Activated naive CD4-positive, alpha-beta T cell treated with anti-CD3 and anti-CD28 coated beads for 36 hours (primary cell): ENCODE measurements at regions of chr3 and their contacts with region 1.

Region 1: DNA sequence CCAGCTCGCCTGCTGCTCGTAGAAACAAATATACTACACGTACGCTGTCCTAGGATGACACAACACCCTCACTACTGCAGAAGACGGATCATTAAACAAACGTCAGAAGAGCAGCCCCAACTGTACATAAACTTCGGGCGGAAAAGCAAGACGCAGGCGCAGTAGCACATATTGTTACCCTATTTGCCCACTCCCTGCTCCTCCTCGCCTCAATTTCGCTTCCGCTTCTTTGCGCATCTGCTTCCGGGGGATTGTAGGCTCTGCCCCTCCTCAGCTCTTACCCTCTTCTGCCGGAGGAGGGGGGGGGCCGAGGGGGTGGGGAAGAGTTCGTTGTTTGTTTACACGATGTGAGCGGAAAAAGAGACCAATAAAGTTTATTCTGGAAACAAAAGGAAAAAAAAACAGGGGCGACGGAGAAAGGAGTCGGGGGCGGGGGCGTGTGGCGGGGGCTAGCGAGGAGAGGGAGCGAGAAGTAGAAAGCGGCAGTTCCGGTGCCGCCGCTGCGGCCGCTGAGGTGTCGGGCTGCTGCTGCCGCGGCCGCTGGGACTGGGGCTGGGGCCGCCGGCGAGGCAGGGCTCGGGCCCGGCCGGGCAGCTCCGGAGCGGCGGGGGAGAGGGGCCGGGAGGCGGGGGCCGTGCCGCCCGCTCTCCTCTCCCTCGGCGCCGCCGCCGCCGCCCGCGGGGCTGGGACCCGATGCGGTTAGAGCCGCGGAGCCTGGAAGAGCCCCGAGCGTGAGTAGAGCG is at the start of gene PIK3CA:
- DNase-seq: peak; percentile 95
- H3K4me3 Mint-ChIP-seq: peak within 1 kb of the TSS; percentile 94
- H3K27ac Mint-ChIP-seq: peak within 1 kb of the TSS; percentile 96
- H3K4me1 Mint-ChIP-seq: peaks cover 36% of the 10 kb centered on the region
- H3K27me3 Mint-ChIP-seq: no peaks in the 10 kb centered on the region
- total RNA-seq, gene PIK3CA: 15.8 to 15.9 TPM

Region 2: GRCh38 chr3:177426878-177427495 is 1721.1 kb before region 1 on chr3:
- CTCF ChIA-PET with region 1: no interaction called
- intact Hi-C with region 1: loop called (anchors 1 kb)
- DNase-seq: peak; percentile 85
- H3K4me3 Mint-ChIP-seq: peak overlapping the region; percentile 40
- H3K27ac Mint-ChIP-seq: peak overlapping the region; percentile 92
- H3K4me1 Mint-ChIP-seq: peaks cover 29% of the 10 kb centered on the region
- H3K27me3 Mint-ChIP-seq: peaks cover 2% of the 10 kb centered on the region

Region 3: DNA sequence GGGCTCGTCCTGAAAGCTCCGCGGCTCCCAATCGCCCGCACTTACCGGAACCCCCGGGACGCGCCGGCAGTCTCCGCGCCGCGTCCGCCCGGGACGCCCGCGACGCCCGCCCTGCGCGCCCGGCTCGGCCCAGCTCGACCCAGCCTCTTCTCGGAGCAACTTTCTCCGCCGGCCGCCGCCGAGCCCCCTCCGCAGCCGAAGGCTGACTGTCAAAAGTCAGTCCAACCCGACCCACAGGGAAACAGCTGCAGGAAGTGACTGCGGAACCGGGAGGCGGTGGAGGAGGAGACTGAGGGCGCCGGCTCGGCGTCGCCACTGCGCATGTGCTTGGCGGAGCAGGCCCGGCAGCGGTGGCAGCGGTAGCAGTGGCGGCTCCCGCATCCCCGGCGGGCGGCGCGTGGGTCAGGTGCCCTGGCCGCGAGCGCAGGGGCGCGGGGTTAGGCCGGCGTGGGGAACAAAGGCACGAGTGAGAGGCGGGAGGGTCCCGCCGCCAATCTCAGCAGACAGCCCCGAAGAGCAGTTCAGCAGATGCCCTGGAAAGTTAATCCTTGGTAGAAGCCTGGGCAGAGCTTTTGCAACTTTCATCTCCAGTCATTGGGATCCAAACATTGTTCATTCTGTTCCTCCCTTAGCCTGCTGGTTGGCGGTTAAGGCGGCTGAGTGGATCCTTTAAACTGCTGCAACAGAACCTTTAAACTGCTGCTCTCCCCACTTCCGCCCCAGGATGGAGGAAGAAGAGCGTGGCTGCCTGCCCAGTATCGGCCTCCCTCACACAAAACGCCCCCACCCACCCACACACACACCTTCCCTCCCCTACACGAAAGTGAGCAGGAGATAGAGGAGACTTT is 76.3 kb before region 1 on chr3 and contains the start of gene ZMAT3:
- CTCF ChIA-PET with region 1: interaction called, 4 read pairs
- intact Hi-C with region 1: loop called (anchors 1 kb)
- DNase-seq: peak; percentile 86
- H3K4me3 Mint-ChIP-seq: peak within 1 kb of the TSS; percentile 99
- H3K27ac Mint-ChIP-seq: peak within 1 kb of the TSS; percentile 89
- H3K4me1 Mint-ChIP-seq: peaks cover 42% of the 10 kb centered on the region
- H3K27me3 Mint-ChIP-seq: no peaks in the 10 kb centered on the region
- total RNA-seq, gene ZMAT3: 26.9 to 28.3 TPM

Region 4: GRCh38 chr3:179196098-179196497 is 48.1 kb after region 1 on chr3:
- CTCF ChIA-PET with region 1: no interaction called
- intact Hi-C with region 1: loop called (anchors 1 kb)
- DNase-seq: peak; percentile 33
- H3K4me3 Mint-ChIP-seq: no peak overlapping the region
- H3K27ac Mint-ChIP-seq: no peak overlapping the region
- H3K4me1 Mint-ChIP-seq: peaks cover 45% of the 10 kb centered on the region
- H3K27me3 Mint-ChIP-seq: no peaks in the 10 kb centered on the region

Region 5: DNA sequence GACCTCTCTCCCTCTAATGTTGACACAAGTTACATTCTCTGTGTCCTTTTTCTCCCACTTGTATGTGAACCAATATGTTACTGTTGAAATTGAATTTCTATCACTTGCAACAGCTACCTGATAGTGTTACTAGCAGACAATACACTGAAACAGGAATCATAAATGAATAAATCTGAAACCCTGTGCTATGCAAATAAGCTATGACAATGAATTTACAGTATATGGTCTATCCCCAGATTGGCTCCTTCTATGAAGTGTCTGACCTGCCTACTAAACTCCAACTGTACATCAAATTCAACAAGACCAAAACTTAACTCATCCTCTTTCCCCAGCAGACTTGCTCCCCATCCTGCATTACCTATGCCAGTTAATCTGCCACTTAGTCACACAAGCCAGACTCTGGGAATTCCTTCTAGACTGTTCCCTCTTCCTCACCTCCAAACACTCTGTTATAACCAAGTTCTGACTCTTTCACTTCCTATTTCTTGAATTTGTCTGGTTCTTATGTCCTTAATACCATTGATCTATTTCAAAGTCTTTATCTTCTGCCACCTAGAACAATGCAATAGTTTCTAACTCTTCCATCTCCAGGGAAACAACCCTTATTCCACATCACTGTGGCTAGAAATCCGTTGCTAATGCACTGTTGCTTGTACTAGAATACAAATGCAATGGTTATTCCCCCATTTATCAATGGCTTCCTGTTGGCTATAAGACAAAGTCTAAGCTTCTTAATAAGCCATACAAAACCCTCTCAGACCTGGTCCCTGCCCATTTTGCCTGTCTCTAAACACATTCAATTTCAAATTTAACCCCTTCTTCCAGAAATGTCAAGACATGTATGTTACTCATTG is 161.4 kb after region 1 on chr3:
- CTCF ChIA-PET with region 1: interaction called, 19 read pairs
- intact Hi-C with region 1: no loop called
- DNase-seq: no peak
- H3K4me3 Mint-ChIP-seq: no peak overlapping the region
- H3K27ac Mint-ChIP-seq: no peak overlapping the region
- H3K4me1 Mint-ChIP-seq: no peaks in the 10 kb centered on the region
- H3K27me3 Mint-ChIP-seq: no peaks in the 10 kb centered on the region

Region 6: GRCh38 chr3:179604321-179605078 is 456.5 kb after region 1 on chr3 and contains the starts of genes MRPL47 and NDUFB5:
- CTCF ChIA-PET with region 1: no interaction called
- intact Hi-C with region 1: loop called (anchors 1 kb)
- DNase-seq: peak; percentile 96
- H3K4me3 Mint-ChIP-seq: peak within 1 kb of the TSS; percentile 100
- H3K27ac Mint-ChIP-seq: peak within 1 kb of the TSS; percentile 99
- H3K4me1 Mint-ChIP-seq: peaks cover 48% of the 10 kb centered on the region
- H3K27me3 Mint-ChIP-seq: no peaks in the 10 kb centered on the region
- total RNA-seq, gene MRPL47: 48.8 to 50.4 TPM
- total RNA-seq, gene NDUFB5: 148 to 151 TPM